Sigmoid colon (tissue), 7 donors: ENCODE measurements at regions of chr16 and their contacts with region 1.

Region 1: GRCh38 chr16:21277927-21278706 is at the start of gene CRYM:
- DNase-seq: peak; percentile 79
- H3K4me3 ChIP-seq: peak within 1 kb of the TSS; percentile 19 to 53 (median 44)
- H3K27ac ChIP-seq: peak within 1 kb of the TSS in 3 of 4 donors; percentile 36 to 50 (median 36)
- H3K4me1 ChIP-seq: peaks cover 0 to 11% (median 8%) of the 10 kb centered on the region in 4 donors
- H3K27me3 ChIP-seq: peaks cover 0 to 25% (median 0%) of the 10 kb centered on the region in 3 donors
- CTCF ChIP-seq: peak; percentile 52 to 96 (median 70)
- EP300 ChIP-seq: no peak
- POLR2A ChIP-seq: no peak
- total RNA-seq, gene CRYM: 1.6 to 6.1 (median 4.6) TPM

Region 2: GRCh38 chr16:21184834-21185233 is 93.3 kb before region 1 on chr16:
- intact Hi-C with region 1: loop called (anchors 5 kb)
- DNase-seq: no peak
- H3K4me3 ChIP-seq: no peak overlapping the region
- H3K27ac ChIP-seq: no peak overlapping the region
- H3K4me1 ChIP-seq: peaks cover 0 to 5% (median 4%) of the 10 kb centered on the region in 4 donors
- H3K27me3 ChIP-seq: no peaks in the 10 kb centered on the region
- CTCF ChIP-seq: no peak
- EP300 ChIP-seq: no peak
- POLR2A ChIP-seq: no peak